ENCODE measurements at regions of chr7 and their contacts with region 1.

Region 1: DNA sequence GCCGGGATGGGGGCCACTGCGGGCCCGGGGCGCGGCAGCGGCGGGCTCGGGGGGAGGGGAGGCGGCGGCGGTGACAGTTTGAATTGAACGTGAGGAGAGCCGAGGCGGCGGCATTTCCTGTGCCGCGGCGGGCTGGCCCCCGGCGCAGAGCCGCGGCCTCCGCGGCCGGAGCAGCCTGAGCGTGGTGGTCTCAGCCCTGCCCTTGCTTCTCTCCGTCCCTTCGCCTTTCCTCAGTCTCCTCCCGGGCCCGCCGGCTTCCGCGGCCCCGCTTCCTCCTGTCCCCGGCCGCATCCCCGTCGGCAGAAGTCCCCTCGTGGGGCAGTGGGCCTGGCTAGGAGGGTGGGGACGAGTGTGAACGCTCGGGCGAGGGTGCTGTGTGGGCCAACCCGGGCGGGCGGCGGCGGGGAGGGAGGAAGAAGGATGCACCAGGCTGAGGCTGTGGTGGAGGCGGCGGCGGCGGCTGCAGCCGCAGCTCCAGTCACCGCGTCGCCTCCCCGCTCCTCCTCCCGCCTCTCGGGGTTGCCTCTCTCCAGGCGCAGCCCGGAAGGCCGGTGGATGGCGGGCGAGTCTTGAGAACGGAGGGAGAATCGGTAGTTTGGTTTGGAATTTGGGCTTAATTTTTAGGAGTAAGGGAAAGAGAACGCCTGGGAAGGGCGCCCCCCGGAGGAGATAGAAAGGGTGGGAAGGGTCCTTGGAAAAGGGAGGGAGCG is 690 bp downstream of the SEPTIN7 start:
- DNase-seq: peak; percentile 73
- H3K4me3 Mint-ChIP-seq: peak overlapping the region; percentile 92
- H3K27ac Mint-ChIP-seq: peak overlapping the region; percentile 94
- H3K4me1 Mint-ChIP-seq: peaks cover 37% of the 10 kb centered on the region
- H3K27me3 Mint-ChIP-seq: no peaks in the 10 kb centered on the region

Region 2: DNA sequence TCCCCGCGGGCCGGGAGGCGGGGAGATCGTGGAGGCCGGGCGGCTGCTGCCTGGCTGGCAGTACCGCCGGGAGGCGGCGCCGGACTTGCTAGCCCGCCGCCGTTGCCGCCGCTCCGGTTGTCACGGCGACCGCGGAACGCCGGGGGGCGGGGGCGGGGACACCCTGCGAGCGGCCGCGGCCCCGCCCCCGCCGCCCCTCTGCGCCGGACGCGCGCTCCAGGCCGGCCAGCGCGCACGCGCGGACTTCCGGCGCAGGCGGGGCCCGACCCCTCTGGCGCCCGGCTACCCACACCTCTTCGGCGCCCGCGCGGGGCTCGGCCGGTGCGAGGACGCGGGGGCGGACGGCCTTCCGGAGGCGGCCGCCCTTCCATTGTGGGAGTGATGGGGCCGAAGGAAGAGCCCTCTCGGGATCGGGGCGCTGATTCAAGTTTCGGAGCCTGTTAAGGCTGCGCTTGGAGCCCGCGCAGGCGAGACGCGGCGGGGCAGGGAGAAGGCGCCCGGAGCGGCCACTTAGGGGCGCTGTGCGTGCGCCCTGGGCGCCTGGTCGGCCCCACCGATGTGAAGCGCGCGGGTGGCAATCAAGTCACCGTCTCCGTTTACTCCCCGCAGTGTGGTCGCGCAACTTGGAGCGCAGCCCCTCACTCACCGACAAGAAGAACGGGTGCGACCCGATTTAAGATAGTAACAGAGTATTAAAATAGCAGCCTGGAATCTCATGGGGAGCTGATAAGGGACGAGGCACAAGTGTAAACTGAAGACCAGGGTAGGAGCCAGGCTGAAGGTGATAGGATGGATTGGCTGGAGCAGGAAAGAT is 763.8 kb before region 1 on chr7:
- intact Hi-C with region 1: loop called (anchors 2 kb)
- DNase-seq: peak; percentile 86
- H3K4me3 Mint-ChIP-seq: peak overlapping the region; percentile 90
- H3K27ac Mint-ChIP-seq: peak overlapping the region; percentile 79
- H3K4me1 Mint-ChIP-seq: peaks cover 23% of the 10 kb centered on the region
- H3K27me3 Mint-ChIP-seq: peaks cover 30% of the 10 kb centered on the region

Region 3: DNA sequence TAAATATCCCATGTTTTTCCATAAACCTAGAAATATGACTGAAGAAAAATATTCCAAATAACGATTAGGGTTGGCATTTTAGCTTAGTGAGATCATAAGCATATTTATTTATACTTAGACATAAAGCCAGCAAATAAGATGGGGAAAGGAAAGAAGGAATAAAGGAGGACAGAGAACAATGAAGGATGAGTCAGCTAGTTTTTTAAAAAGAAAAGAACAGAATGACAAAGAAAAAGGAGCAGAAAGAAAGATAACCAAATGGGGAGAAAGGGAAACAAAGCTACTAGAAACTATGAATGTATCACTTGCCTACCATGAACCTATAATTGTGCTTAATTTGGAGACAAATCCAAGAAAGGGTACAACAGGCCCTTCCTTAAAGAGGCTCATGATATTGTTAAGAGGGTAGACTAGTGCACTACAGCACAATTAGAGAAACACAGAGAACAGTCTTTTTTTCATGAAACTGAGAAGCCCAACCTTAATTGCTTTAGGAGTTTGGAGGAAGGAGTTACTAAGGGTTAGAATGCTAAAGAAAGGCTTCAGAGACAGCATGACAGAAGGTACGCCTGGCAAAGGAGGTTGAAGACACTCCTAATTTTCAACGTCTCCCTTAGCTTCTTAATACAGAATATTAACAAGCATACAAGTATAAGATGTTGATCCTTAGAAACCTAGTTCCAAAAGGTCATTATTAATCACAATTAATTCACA is 130.5 kb before region 1 on chr7:
- intact Hi-C with region 1: no loop called
- DNase-seq: no peak
- H3K4me3 Mint-ChIP-seq: no peak overlapping the region
- H3K27ac Mint-ChIP-seq: no peak overlapping the region
- H3K4me1 Mint-ChIP-seq: peaks cover 8% of the 10 kb centered on the region
- H3K27me3 Mint-ChIP-seq: no peaks in the 10 kb centered on the region

Region 4: DNA sequence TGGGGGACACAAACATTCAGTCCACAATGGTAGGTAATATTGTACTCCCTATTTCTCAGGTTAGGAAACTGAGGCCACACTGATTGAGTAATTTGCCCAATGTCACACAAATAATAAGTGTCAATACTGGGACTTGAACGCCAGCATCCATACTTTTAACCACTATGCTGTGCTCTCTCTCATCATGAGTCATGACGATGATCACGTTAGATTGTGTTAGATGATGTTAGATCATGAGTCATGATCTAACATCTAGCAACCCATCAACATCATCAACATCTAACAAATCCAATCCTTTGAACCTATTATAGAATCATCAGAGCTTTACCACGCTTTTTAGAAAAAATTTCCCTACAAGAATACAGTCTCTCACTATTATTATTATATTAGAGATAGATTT is 78.5 kb before region 1 on chr7:
- intact Hi-C with region 1: loop called (anchors 1 kb)
- DNase-seq: no peak
- H3K4me3 Mint-ChIP-seq: no peak overlapping the region
- H3K27ac Mint-ChIP-seq: peak overlapping the region; percentile 81
- H3K4me1 Mint-ChIP-seq: peaks cover 52% of the 10 kb centered on the region
- H3K27me3 Mint-ChIP-seq: no peaks in the 10 kb centered on the region

Region 5: DNA sequence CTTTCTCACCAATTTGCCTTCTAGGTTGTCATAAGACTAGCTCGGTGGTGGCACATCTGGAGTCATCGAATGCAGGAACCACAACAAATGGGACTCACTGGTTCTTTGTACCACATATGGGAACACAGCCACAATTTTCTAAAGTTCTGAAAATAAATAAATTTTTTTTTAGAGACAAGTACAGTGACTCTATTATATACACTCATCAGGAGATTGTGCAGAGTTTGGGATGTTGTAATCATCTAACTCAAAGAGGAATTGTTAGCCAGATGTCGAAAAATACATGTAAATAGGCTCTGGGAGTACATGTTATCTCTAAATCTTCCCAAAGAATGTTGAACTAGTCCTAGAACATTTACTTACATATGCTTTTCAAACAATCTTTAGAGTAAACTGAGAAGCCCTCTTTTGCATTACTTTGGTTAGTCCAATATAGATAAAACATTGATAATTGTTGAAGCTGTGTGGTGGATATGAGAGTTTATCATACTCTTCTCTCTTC is 20.3 kb before region 1 on chr7:
- intact Hi-C with region 1: no loop called
- DNase-seq: no peak
- H3K4me3 Mint-ChIP-seq: no peak overlapping the region
- H3K27ac Mint-ChIP-seq: no peak overlapping the region
- H3K4me1 Mint-ChIP-seq: no peaks in the 10 kb centered on the region
- H3K27me3 Mint-ChIP-seq: peaks cover 3% of the 10 kb centered on the region

Region 6: DNA sequence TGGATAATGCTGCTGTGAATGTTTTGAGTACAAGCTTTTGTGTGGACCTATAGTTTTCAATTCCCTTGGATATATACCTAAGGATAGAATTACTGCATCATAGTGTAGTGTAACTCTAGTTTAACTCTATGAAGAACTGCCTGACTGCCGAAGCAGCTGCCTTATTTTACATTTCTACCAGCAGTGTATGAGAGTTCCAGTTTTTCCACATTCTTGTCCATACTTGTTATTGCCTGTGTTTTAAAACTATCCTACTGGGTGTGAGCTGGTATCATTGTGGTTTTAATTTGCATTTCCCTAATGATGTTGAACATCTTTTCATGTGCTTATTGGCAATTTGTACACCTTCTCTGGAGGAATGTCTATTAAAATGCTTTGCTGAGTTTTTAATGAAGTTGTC is 15.0 kb after region 1 on chr7:
- intact Hi-C with region 1: loop called (anchors 1 kb)
- DNase-seq: no peak
- H3K4me3 Mint-ChIP-seq: no peak overlapping the region
- H3K27ac Mint-ChIP-seq: no peak overlapping the region
- H3K4me1 Mint-ChIP-seq: peaks cover 59% of the 10 kb centered on the region
- H3K27me3 Mint-ChIP-seq: no peaks in the 10 kb centered on the region

Region 7: GRCh38 chr7:36115448-36116321 is 314.1 kb after region 1 on chr7:
- intact Hi-C with region 1: loop called (anchors 10 kb)
- DNase-seq: peak; percentile 61
- H3K4me3 Mint-ChIP-seq: no peak overlapping the region
- H3K27ac Mint-ChIP-seq: peak overlapping the region; percentile 47
- H3K4me1 Mint-ChIP-seq: peaks cover 27% of the 10 kb centered on the region
- H3K27me3 Mint-ChIP-seq: peaks cover 21% of the 10 kb centered on the region